AG04449 (cell line): ENCODE measurements at regions of chr2 and their contacts with region 1.

Region 1: GRCh38 chr2:44044281-44044720 is 48.5 kb upstream of the LRPPRC start:
- DNase-seq: peak; percentile 12
- H3K4me3 ChIP-seq: no peak overlapping the region
- CTCF ChIP-seq: peak; percentile 93

Region 2: GRCh38 chr2:43925431-43925830 is 118.9 kb before region 1 on chr2:
- CTCF ChIA-PET with region 1: no interaction called
- POLR2A ChIA-PET with region 1: no interaction called
- DNase-seq: no peak
- H3K4me3 ChIP-seq: no peak overlapping the region
- CTCF ChIP-seq: no peak

Region 3: DNA sequence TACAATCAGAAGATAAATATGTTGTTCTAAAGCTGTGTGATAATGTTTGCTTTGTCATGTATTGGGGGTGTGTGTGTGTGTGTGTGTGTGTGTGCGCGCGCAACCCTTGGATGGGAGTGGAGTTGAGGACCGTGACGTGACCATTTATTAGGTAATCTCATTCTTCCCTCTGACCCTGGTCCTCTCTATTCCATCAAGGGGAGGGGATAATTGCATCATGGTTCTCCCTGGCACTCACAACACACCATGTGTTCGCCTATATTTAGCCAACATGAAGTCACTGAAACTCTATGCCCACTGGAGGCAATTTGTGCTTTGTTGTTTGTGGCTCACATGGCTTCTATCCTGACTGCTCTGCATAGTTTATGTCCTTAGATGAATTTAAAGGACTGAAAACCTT is 31.2 kb after region 1 on chr2:
- CTCF ChIA-PET with region 1: interaction called, 15 read pairs
- POLR2A ChIA-PET with region 1: no interaction called
- DNase-seq: peak; percentile 26
- H3K4me3 ChIP-seq: no peak overlapping the region
- CTCF ChIP-seq: no peak

Region 4: GRCh38 chr2:44291281-44292248 is 247.3 kb after region 1 on chr2:
- CTCF ChIA-PET with region 1: interaction called, 29 read pairs
- POLR2A ChIA-PET with region 1: no interaction called
- DNase-seq: no peak
- H3K4me3 ChIP-seq: no peak overlapping the region; the same call in 1 of the 2 replicates
- CTCF ChIP-seq: peak; percentile 66

Region 5: DNA sequence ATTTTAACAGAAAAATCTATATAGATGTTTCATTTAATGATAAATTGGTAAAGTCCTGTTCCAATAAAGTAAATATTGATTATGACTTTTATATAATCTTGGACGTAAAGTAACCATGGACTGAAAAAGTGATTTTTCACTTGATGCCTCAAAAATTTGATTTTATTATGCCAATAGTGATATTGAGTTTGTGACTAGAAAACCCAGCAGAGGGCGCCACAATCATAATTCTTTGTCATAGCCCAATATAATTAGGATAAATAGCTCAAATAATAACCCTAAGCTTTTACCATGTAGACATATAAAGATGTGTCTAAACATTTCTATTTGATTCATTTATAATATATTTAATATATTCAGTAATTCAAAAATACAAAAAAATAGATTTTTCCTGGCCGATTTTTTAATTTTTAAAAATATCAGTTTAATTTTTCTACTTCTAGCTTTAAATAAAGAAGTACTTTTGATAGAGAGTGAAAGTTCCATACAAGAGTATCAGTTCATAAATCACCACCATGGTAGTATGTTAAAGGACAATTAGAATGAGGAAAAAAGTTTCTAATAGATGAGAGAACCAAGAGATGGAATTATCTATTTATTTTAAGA is 348.1 kb after region 1 on chr2:
- CTCF ChIA-PET with region 1: interaction called, 32 read pairs
- POLR2A ChIA-PET with region 1: no interaction called
- DNase-seq: no peak
- H3K4me3 ChIP-seq: no peak overlapping the region
- CTCF ChIP-seq: peak; percentile 44

Region 6: GRCh38 chr2:44955593-44956392 is 911.5 kb after region 1 on chr2:
- CTCF ChIA-PET with region 1: interaction called, 14 read pairs
- POLR2A ChIA-PET with region 1: no interaction called
- DNase-seq: no peak
- H3K4me3 ChIP-seq: no peak overlapping the region; the same call in 1 of the 2 replicates
- CTCF ChIP-seq: peak; percentile 93